PC-3 (cell line): ENCODE measurements at regions of chr3 and their contacts with region 1.

Region 1: DNA sequence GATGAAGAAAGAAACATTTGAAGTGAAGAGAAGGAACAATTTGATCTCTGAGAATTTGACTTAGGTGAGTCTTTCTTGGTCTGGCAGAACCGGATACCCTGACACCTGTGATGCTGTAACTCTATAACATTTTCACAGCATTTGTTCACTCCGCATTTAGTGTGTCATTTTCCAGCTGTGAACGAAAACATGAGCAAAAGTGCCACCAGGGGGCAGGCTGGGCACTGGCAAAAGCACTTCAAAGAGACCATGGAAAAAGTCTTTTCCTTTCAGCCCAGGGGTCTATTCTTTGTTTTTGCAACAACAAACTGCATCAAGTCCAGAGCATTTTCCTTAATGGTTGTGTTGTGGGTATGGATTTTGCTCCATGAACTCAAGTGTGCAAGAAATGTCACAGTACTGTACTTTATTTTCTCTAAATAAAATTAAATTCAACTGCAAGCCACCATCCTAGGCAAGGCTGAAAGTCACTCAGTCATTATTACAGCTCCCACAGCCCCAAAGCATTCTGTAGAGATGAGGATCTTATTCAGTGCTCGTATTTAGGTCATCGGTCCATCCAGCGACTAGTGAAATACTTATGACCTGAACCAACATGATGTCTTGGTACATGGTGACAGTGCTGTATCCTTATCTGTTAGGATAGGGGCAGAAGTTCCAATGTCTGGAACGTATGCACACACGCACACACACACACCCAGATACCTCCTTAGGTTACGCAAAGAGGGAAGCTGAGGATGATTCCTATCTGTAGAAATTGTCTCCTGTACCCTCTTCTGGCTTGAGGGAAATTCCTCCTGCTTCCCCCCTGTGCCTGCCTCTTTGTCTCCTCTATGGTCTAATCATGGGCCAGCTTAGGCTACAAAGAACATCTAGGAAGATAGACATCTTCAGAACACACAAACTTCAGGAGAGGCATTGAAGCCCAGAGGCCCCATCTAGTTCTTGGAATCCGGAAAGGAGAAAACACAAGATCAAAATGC is 125.5 kb downstream of the GADL1 start:
- DNase-seq: peak; percentile 87
- ATAC-seq: 0 out of 2 replicates have a peak, but pooled peaks have one; percentile 23
- H3K4me3 ChIP-seq: no peak overlapping the region
- H3K27ac ChIP-seq: no peak overlapping the region
- H3K4me1 ChIP-seq: peaks cover 34% of the 10 kb centered on the region
- H3K27me3 ChIP-seq: no peaks in the 10 kb centered on the region
- CTCF ChIP-seq: peak; percentile 96

Region 2: GRCh38 chr3:30779686-30780287 is 10.8 kb after region 1 on chr3:
- CTCF ChIA-PET with region 1: no interaction called
- POLR2A ChIA-PET with region 1: no interaction called
- intact Hi-C with region 1: no loop called
- DNase-seq: peak; percentile 72
- ATAC-seq: no peak
- H3K4me3 ChIP-seq: no peak overlapping the region
- H3K27ac ChIP-seq: no peak overlapping the region
- H3K4me1 ChIP-seq: peaks cover 21% of the 10 kb centered on the region
- H3K27me3 ChIP-seq: no peaks in the 10 kb centered on the region
- CTCF ChIP-seq: peak; percentile 80

Region 3: GRCh38 chr3:30852833-30853232 is 83.8 kb after region 1 on chr3:
- CTCF ChIA-PET with region 1: no interaction called
- POLR2A ChIA-PET with region 1: no interaction called
- intact Hi-C with region 1: no loop called
- DNase-seq: no peak
- ATAC-seq: no peak
- H3K4me3 ChIP-seq: no peak overlapping the region
- H3K27ac ChIP-seq: no peak overlapping the region
- H3K4me1 ChIP-seq: peaks cover 11% of the 10 kb centered on the region; the same call in 1 of the 2 replicates
- H3K27me3 ChIP-seq: no peaks in the 10 kb centered on the region
- CTCF ChIP-seq: no peak

Region 4: GRCh38 chr3:30934208-30934550 is 165.2 kb after region 1 on chr3:
- CTCF ChIA-PET with region 1: interaction called, 8 read pairs
- POLR2A ChIA-PET with region 1: no interaction called
- intact Hi-C with region 1: loop called (anchors 1 kb)
- DNase-seq: peak; percentile 68
- ATAC-seq: peak; percentile 95
- H3K4me3 ChIP-seq: peak overlapping the region; percentile 10; the same call in 1 of the 2 replicates
- H3K27ac ChIP-seq: no peak overlapping the region
- H3K4me1 ChIP-seq: no peaks in the 10 kb centered on the region
- H3K27me3 ChIP-seq: no peaks in the 10 kb centered on the region
- CTCF ChIP-seq: peak; percentile 79

Region 5: GRCh38 chr3:30970183-30970582 is 201.2 kb after region 1 on chr3:
- CTCF ChIA-PET with region 1: no interaction called
- POLR2A ChIA-PET with region 1: no interaction called
- intact Hi-C with region 1: loop called (anchors 2 kb)
- DNase-seq: peak; percentile 67
- ATAC-seq: peak; percentile 97
- H3K4me3 ChIP-seq: no peak overlapping the region
- H3K27ac ChIP-seq: no peak overlapping the region
- H3K4me1 ChIP-seq: no peaks in the 10 kb centered on the region
- H3K27me3 ChIP-seq: no peaks in the 10 kb centered on the region
- CTCF ChIP-seq: peak; percentile 86

Region 6: DNA sequence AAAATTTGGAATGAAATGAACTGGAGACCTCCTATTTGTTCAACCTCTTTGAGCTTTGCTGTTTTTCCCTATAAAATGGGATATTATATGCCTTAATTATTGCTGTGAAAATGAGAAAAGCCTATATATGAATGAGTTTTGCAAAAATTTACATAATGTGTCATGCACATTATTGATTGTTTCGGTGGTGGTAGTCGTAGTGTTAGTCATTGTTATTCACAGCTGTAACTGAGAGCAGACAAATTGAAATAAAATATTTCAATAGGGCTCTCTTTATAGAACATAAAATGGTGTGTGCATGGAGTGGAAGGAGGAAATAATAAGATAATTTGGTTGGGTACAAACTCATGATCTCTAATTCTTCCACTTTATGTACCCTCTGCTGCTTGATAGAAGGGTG is 279.1 kb after region 1 on chr3:
- CTCF ChIA-PET with region 1: no interaction called
- POLR2A ChIA-PET with region 1: no interaction called
- intact Hi-C with region 1: loop called (anchors 5 kb)
- DNase-seq: peak; percentile 51
- ATAC-seq: peak; percentile 66
- H3K4me3 ChIP-seq: no peak overlapping the region
- H3K27ac ChIP-seq: peak overlapping the region; percentile 82
- H3K4me1 ChIP-seq: peaks cover 36% of the 10 kb centered on the region
- H3K27me3 ChIP-seq: no peaks in the 10 kb centered on the region
- CTCF ChIP-seq: no peak

Region 7: GRCh38 chr3:31132132-31132769 is 363.3 kb after region 1 on chr3:
- CTCF ChIA-PET with region 1: interaction called, 8 read pairs
- POLR2A ChIA-PET with region 1: no interaction called
- intact Hi-C with region 1: loop called (anchors 1 kb)
- DNase-seq: peak; percentile 76
- ATAC-seq: peak; percentile 64
- H3K4me3 ChIP-seq: no peak overlapping the region
- H3K27ac ChIP-seq: no peak overlapping the region
- H3K4me1 ChIP-seq: no peaks in the 10 kb centered on the region
- H3K27me3 ChIP-seq: no peaks in the 10 kb centered on the region
- CTCF ChIP-seq: peak; percentile 91

Region 8: GRCh38 chr3:31648286-31648968 is 879.4 kb after region 1 on chr3:
- CTCF ChIA-PET with region 1: no interaction called
- POLR2A ChIA-PET with region 1: no interaction called
- intact Hi-C with region 1: no loop called
- DNase-seq: no peak
- ATAC-seq: peak; percentile 13
- H3K4me3 ChIP-seq: no peak overlapping the region
- H3K27ac ChIP-seq: no peak overlapping the region
- H3K4me1 ChIP-seq: 0 out of 2 replicates have a peak, but pooled peaks cover 4% of the 10 kb centered on the region
- H3K27me3 ChIP-seq: no peaks in the 10 kb centered on the region
- CTCF ChIP-seq: no peak